Activated T-helper 1 cell treated with anti-CD3 and anti-CD28 coated beads, Interleukin-12 subunit alpha, Interleukin-12 subunit beta, Interleukin-2, Interleukin-4 antibody, amounts not matched to agents 30 ng/mL and 10 ng/mL and 1 ng/mL, durations not matched to agents 14 hours and 24 hours and 36 hours (primary cell): ENCODE measurements at regions of chr21 and their contacts with region 1.

Region 1: GRCh38 chr21:44601596-44602462 is 1.4 kb downstream of the KRTAP10-7 start:
- DNase-seq: no peak
- H3K4me3 Mint-ChIP-seq: no peak overlapping the region
- H3K27ac Mint-ChIP-seq: no peak overlapping the region
- H3K4me1 Mint-ChIP-seq: no peaks in the 10 kb centered on the region
- H3K27me3 Mint-ChIP-seq: peaks cover 15% of the 10 kb centered on the region

Region 2: GRCh38 chr21:44428281-44428942 is 173.4 kb before region 1 on chr21:
- intact Hi-C with region 1: no loop called
- DNase-seq: peak; percentile 49
- H3K4me3 Mint-ChIP-seq: no peak overlapping the region
- H3K27ac Mint-ChIP-seq: no peak overlapping the region
- H3K4me1 Mint-ChIP-seq: no peaks in the 10 kb centered on the region
- H3K27me3 Mint-ChIP-seq: no peaks in the 10 kb centered on the region

Region 3: GRCh38 chr21:44572966-44573583 is 28.8 kb before region 1 on chr21:
- intact Hi-C with region 1: loop called (anchors 2 kb)
- DNase-seq: no peak
- H3K4me3 Mint-ChIP-seq: no peak overlapping the region
- H3K27ac Mint-ChIP-seq: no peak overlapping the region
- H3K4me1 Mint-ChIP-seq: no peaks in the 10 kb centered on the region
- H3K27me3 Mint-ChIP-seq: peaks cover 2% of the 10 kb centered on the region